Gastrocnemius medialis (tissue), 4 donors: ENCODE measurements at regions of chr4 and their contacts with region 1.

Region 1: DNA sequence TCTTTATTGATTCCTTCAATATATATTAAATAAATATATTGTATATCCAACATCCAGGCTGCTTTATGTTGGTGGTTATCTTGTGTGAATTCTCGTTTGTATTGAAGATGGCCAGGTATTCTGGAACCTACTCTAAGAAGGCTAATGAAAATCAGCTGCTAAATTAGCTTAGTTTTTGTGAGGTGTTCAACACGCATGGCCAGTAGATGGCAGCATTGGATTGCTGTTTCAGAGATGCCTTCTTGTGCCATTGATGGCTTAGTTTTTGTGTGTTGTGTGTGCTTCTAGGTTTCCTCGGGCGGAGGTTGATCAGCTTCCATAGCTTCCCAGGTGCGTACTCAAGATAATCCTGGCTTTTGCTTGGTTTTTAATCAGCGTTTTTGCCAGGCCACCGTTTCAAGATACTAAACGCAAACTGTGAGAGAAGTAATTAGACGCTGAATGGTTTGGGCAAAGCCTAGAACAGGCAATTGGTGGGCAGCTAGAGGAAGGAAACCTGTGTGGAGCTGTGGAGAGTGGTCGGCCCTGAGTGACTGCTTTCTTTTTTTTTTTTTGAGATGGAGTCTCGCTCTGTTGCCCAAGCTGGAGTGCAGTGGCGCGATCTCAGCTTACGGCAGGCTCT is 15.1 kb downstream of the NOCT start:
- DNase-seq: peak; percentile 59 to 75
- ATAC-seq: peak; percentile 45 to 65
- H3K4me3 ChIP-seq: no peak overlapping the region
- H3K27ac ChIP-seq: peak overlapping the region; percentile 88 to 92 (median 90)
- H3K4me1 ChIP-seq: peaks cover 22 to 43% of the 10 kb centered on the region in 2 donors
- H3K27me3 ChIP-seq: no peaks in the 10 kb centered on the region
- CTCF ChIP-seq: peak; percentile 82 to 90 (median 86)
- POLR2A ChIP-seq: no peak

Region 2: DNA sequence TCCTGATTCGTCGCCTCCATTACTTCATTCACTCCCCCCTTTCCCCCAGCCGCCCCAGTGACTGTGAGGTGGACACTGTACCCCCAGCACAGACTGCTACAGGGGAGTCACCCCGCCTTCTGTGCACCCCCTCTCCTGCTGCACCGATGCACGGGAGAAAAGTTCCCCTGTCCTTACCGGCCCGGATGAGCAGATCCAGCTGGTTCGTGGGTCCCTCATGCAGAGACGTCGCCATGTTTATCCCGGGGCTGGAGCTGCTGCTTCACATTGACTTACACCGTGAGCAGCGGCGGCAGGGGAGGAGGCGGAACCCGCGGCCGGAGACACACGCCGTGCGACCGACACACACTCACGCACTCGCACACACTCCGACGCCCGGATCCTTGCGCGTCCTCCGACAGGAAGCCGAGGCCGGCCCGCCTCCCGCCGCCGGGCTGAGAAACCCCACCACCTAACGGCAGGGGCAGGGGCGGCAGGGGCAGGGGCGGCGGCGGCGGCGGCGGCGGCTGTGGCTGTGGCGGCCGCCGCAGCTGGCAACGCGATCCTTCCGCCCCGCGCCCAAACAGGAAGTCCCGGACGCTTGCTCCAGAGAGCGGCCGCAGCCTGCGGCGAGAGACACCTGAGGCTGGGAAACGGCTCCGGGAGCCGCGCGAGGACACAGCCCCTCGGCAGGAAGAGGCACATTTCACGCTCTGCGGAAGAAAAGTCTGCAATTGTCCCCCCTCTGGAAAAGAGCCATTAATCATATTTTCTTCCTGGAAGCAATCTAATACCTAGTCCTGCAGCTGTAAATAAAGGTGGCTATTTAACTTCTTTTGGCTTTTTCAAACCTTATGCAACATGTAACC is 53.5 kb after region 1 on chr4:
- in situ Hi-C with region 1: loop called in 3 of 4 experiments (anchors 5 to 10 kb)
- intact Hi-C with region 1: loop called (anchors 2 kb)
- DNase-seq: peak; percentile 81 to 91
- ATAC-seq: peak; percentile 66 to 69
- H3K4me3 ChIP-seq: peak overlapping the region; percentile 65 to 90 (median 70)
- H3K27ac ChIP-seq: peak overlapping the region; percentile 92 to 98 (median 92)
- H3K4me1 ChIP-seq: peaks cover 38 to 41% of the 10 kb centered on the region in 2 donors
- H3K27me3 ChIP-seq: no peaks in the 10 kb centered on the region
- CTCF ChIP-seq: peak in 4 of 5 experiments; percentile 23 to 56 (median 48)
- POLR2A ChIP-seq: peak; percentile 37 to 58

Region 3: DNA sequence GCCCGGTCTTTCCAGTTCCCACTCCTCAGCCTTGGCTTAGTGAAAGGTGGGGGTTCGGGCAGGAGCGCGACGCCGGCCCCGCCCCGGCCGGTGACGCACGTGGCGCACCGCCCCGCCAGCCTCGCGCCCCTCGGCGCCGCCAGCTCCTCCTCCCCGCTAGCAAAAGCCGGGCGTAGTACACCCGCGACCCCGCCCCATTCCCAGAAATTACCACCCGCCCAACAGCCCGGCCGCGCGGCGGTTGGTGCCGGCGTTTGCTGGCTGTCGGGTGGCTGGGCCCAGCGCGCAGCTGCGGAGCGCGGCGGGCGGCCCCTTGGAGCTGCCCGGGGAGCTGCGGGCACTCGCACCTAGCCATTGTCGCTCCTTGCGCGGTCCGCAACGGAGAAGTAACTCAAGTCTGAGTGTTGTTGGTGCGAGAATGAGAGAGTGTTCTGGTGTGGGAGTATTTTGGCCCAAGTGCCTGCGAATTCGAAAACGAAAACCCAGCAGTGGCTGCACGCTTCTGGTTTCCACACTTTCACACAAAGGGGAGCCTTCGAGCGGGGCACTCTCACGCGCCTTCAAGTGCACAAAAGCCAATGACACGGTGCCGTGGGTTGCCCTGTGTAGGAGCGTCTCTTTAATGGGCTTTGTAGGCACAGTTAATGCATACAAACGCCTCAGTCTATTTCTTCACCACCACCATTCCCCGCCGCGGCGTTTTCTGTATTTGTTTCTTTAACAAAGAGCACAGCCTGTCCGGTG is 147.3 kb after region 1 on chr4:
- in situ Hi-C with region 1: loop called in 1 of 4 experiments (anchors 25 kb)
- intact Hi-C with region 1: loop called (anchors 1 kb)
- DNase-seq: peak; percentile 93 to 95
- ATAC-seq: peak; percentile 70 to 71
- H3K4me3 ChIP-seq: peak overlapping the region; percentile 81 to 96 (median 88)
- H3K27ac ChIP-seq: peak overlapping the region; percentile 98 to 100 (median 100)
- H3K4me1 ChIP-seq: peaks cover 13 to 28% of the 10 kb centered on the region in 2 donors
- H3K27me3 ChIP-seq: no peaks in the 10 kb centered on the region
- CTCF ChIP-seq: no peak
- POLR2A ChIP-seq: peak; percentile 89 to 93

Region 4: DNA sequence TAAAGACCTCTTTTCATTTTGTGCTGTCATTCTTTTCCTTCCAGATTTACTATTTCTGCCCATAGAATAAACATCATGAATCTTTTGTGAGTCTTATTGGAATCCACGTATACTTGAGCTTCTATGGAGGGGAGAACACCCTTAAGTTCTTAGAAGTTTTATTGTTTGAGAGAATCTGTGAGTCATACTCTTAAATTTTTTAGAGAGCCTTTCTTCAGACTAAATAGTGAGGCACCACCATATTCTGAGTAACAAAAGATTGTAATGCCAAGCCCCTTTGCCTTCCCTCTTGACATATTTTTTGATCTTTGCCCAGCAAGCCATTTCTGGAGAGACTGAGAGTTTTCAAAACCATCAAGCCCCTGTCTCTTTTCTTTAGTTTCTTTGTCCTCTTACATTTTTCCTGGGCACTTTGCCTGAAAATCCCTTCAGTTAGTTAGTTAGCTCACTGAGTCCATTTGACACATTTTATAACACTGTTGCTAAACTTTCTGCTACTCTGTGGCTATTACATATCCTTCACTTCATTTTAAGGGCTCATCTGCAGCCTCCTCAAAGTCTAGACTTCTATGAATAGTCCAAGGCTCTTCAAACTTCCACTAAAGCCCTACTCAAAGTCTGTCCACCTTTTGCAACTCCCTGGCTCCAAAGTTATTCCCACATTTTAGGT is 336.8 kb after region 1 on chr4:
- in situ Hi-C with region 1: no loop called
- intact Hi-C with region 1: no loop called
- DNase-seq: no peak
- ATAC-seq: no peak
- H3K4me3 ChIP-seq: no peak overlapping the region
- H3K27ac ChIP-seq: no peak overlapping the region
- H3K4me1 ChIP-seq: no peaks in the 10 kb centered on the region
- H3K27me3 ChIP-seq: no peaks in the 10 kb centered on the region
- CTCF ChIP-seq: no peak
- POLR2A ChIP-seq: no peak

Region 5: GRCh38 chr4:139453371-139454110 is 422.8 kb after region 1 on chr4:
- in situ Hi-C with region 1: no loop called
- intact Hi-C with region 1: loop called (anchors 5 kb)
- DNase-seq: peak; percentile 96
- ATAC-seq: peak; percentile 95
- H3K4me3 ChIP-seq: peak overlapping the region; percentile 69 to 98 (median 80)
- H3K27ac ChIP-seq: peak overlapping the region; percentile 88 to 96 (median 95)
- H3K4me1 ChIP-seq: peaks cover 30 to 38% of the 10 kb centered on the region in 2 donors
- H3K27me3 ChIP-seq: no peaks in the 10 kb centered on the region
- CTCF ChIP-seq: peak in 2 of 5 experiments; percentile 6 to 9
- POLR2A ChIP-seq: no peak

Region 6: GRCh38 chr4:139633661-139634060 is 602.9 kb after region 1 on chr4:
- in situ Hi-C with region 1: loop called in 1 of 4 experiments (anchors 25 kb)
- intact Hi-C with region 1: no loop called
- DNase-seq: no peak
- ATAC-seq: peak; percentile 75 to 79
- H3K4me3 ChIP-seq: peak overlapping the region in 2 of 4 donors; percentile 22
- H3K27ac ChIP-seq: no peak overlapping the region
- H3K4me1 ChIP-seq: peaks cover 0 to 6% of the 10 kb centered on the region in 2 donors
- H3K27me3 ChIP-seq: no peaks in the 10 kb centered on the region
- CTCF ChIP-seq: peak in 4 of 5 experiments; percentile 20 to 46 (median 42)
- POLR2A ChIP-seq: no peak